ENCODE measurements at regions of chr4 and their contacts with region 1.

Region 1: DNA sequence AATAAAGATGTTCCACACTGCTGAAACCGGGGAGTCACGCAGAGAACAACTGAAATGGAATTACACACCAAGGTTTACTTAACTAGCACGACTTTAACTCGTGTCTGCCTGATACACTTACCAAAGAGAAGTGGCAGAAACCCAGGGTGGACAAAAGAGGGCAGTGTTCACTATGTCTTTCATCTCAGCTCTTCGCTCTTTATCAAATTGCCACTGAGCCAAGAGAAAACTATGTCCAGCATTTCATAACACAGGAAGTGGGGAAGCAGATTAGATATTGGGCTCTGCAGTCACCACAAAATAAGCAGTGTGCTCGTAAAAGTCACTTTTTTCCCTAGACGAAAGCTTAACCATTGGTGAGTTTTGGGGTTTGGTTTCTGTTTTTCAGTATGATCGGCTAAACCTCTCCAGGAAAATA is 155.7 kb downstream of the CHIC2 start:
- DNase-seq: peak; percentile 79
- H3K4me3 ChIP-seq: peak overlapping the region; percentile 28
- CTCF ChIP-seq: peak; percentile 65

Region 2: DNA sequence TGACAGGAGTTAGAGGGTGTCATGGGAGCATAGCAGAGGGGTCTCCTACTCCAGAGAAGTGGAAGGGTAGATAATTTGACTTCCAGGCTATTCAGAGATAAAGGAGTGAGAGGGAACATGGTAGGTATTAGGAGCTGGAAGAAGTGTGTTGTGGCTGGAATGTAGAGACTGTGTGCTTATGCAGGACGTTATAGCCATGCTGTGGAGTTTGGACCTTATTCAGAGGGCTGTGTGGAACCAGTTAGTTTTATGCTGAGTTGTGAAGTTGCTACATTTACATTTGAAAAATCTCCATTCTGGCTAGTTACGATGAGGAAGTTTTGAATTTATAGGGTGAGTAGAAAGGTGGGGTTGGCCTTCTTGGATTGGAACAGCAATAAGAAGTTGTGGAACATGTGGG is 463.7 kb before region 1 on chr4:
- CTCF ChIA-PET with region 1: no interaction called
- POLR2A ChIA-PET with region 1: no interaction called
- DNase-seq: no peak
- H3K4me3 ChIP-seq: no peak overlapping the region
- CTCF ChIP-seq: no peak

Region 3: GRCh38 chr4:53717064-53717549 is 191.6 kb before region 1 on chr4:
- CTCF ChIA-PET with region 1: interaction called, 17 read pairs
- POLR2A ChIA-PET with region 1: no interaction called
- DNase-seq: no peak
- H3K4me3 ChIP-seq: no peak overlapping the region
- CTCF ChIP-seq: no peak

Region 4: GRCh38 chr4:53929955-53930798 is 21.5 kb after region 1 on chr4:
- CTCF ChIA-PET with region 1: interaction called, 64 read pairs
- POLR2A ChIA-PET with region 1: interaction called, 5 read pairs
- DNase-seq: peak; percentile 71
- H3K4me3 ChIP-seq: no peak overlapping the region
- CTCF ChIP-seq: peak; percentile 74

Region 5: GRCh38 chr4:54217642-54218495 is 309.2 kb after region 1 on chr4:
- CTCF ChIA-PET with region 1: interaction called, 46 read pairs
- POLR2A ChIA-PET with region 1: no interaction called
- DNase-seq: no peak
- H3K4me3 ChIP-seq: peak overlapping the region; percentile 62
- CTCF ChIP-seq: peak; percentile 76